Psoas muscle (tissue), 8 donors: ENCODE measurements at regions of chr1 and their contacts with region 1.

Region 1: DNA sequence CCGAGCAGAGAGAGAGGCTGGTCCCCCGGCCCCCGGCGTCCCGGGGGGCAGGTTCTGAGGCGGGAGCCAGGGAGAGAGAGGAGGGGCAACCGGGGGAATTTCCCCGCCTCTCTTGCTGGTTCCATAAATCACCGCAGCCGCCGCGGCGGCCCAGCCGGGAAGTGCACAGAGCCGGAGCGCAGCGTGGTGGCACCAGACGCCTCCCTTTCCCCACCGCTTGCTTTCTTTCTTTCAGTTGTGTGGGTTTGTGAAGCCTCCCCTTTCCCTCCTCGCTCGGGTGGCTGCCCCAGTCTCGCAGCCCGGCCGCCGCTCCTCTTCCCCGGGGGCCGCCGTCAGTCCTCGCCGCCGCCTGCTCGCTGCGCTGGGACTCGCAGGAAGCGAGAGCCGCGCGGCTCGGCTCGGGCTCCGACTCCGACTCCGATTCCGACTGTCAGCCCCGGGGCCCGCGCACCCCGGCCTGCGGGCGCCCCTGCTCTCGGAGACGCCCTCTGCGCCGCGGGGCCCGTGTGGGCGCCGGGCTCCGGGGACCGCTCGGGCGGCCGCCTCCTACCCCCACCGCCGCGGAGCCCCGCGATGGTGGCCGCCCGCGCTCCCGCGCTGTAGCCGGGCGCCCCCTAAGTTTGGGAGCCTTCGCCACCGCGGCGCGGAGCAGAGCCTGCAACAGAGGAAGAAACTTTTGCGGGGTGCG is at the start of gene CACHD1:
- DNase-seq: peak; percentile 79 to 88
- ATAC-seq: peak; percentile 77 to 90 (median 84)
- H3K4me3 ChIP-seq: peak within 1 kb of the TSS; percentile 91
- H3K27ac ChIP-seq: peak within 1 kb of the TSS; percentile 88
- H3K4me1 ChIP-seq: no peaks in the 10 kb centered on the region
- H3K27me3 ChIP-seq: no peaks in the 10 kb centered on the region
- CTCF ChIP-seq: peak; percentile 48
- total RNA-seq, gene CACHD1: 2.1 to 5.8 (median 4.1) TPM

Region 2: GRCh38 chr1:64268653-64269557 is 201.2 kb before region 1 on chr1:
- intact Hi-C with region 1: loop called in 1 of 2 experiments (anchors 10 kb)
- DNase-seq: peak; percentile 45 to 50
- ATAC-seq: peak; percentile 80 to 92 (median 81)
- H3K4me3 ChIP-seq: no peak overlapping the region
- H3K27ac ChIP-seq: no peak overlapping the region
- H3K4me1 ChIP-seq: no peaks in the 10 kb centered on the region
- H3K27me3 ChIP-seq: no peaks in the 10 kb centered on the region
- CTCF ChIP-seq: peak; percentile 84

Region 3: GRCh38 chr1:64505232-64505943 is 35.3 kb after region 1 on chr1:
- intact Hi-C with region 1: loop called in 1 of 2 experiments (anchors 1 kb)
- DNase-seq: peak; percentile 34 to 63
- ATAC-seq: peak; percentile 65 to 83 (median 72)
- H3K4me3 ChIP-seq: peak overlapping the region; percentile 69
- H3K27ac ChIP-seq: peak overlapping the region; percentile 12
- H3K4me1 ChIP-seq: peaks cover 12% of the 10 kb centered on the region
- H3K27me3 ChIP-seq: no peaks in the 10 kb centered on the region
- CTCF ChIP-seq: no peak

Region 4: GRCh38 chr1:64616039-64616438 is 145.9 kb after region 1 on chr1:
- intact Hi-C with region 1: loop called in 1 of 2 experiments (anchors 5 kb)
- DNase-seq: no peak
- ATAC-seq: peak; percentile 98 to 99 (median 98)
- H3K4me3 ChIP-seq: peak overlapping the region; percentile 13
- H3K27ac ChIP-seq: peak overlapping the region; percentile 82
- H3K4me1 ChIP-seq: peaks cover 17% of the 10 kb centered on the region
- H3K27me3 ChIP-seq: no peaks in the 10 kb centered on the region
- CTCF ChIP-seq: no peak

Region 5: DNA sequence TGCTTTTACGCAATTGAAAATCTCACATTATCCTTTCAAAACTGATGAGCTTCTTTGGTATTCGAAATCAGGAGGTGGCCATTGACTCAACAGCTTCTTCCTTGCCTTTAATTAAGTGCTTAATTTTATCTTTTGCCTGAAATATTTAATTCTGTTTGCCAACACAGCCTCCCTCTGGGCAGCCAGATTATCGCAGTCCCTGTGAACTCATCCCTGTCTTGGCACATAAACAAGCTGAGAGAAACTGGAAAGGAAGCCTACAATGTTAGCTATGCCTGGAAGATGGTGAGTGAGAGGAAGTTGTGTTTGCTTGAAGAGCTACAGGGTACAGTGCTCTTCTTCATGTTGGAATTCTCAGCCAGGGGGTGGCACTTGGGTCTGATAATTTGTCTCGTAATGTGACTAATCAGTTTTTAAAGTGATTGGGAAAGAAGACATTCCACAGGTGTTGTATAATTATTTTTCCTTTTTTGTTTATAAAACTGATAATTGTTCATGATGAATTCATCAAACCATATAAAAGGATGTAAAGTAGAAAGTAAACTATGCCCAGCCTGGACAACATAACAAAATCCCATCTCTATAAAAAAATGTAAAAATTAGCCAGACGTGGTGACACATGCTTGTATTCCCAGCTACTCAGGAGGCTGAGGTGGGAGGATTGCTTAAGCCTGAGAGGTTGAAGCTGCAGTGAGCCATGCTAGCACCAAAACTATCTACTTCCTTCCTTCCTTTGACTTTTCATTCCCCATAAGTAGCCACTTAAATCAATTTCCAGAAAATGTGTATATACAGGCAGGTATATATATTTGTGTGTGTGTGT is 184.6 kb after region 1 on chr1:
- intact Hi-C with region 1: loop called in 1 of 2 experiments (anchors 2 kb)
- DNase-seq: no peak
- ATAC-seq: no peak
- H3K4me3 ChIP-seq: no peak overlapping the region
- H3K27ac ChIP-seq: no peak overlapping the region
- H3K4me1 ChIP-seq: no peaks in the 10 kb centered on the region
- H3K27me3 ChIP-seq: no peaks in the 10 kb centered on the region
- CTCF ChIP-seq: peak; percentile 26

Region 6: GRCh38 chr1:64675718-64676345 is 205.7 kb after region 1 on chr1:
- intact Hi-C with region 1: loop called (anchors 5 kb)
- DNase-seq: no peak
- ATAC-seq: no peak
- H3K4me3 ChIP-seq: no peak overlapping the region
- H3K27ac ChIP-seq: no peak overlapping the region
- H3K4me1 ChIP-seq: no peaks in the 10 kb centered on the region
- H3K27me3 ChIP-seq: no peaks in the 10 kb centered on the region
- CTCF ChIP-seq: peak; percentile 69

Region 7: DNA sequence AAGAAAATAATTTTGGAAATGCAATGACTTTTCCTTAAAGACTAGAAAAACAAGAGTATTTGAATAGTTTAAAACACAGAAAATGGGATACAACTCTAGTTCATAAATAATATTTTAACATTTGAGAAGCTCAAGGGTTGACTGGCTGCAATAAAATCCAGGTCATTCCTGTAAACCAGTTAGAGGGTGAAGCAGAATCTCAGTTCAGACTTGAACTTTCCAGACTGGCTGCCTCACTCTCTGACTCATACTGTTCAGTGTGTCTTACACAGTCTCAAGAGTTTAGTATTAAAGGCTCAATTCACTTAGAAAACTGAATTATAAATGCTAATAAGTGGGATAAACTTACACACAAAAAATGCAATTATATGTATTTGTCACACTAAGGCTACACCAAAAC is 364.6 kb after region 1 on chr1:
- intact Hi-C with region 1: loop called in 1 of 2 experiments (anchors 10 kb)
- DNase-seq: no peak
- ATAC-seq: peak in 1 of 4 donors; percentile 39
- H3K4me3 ChIP-seq: no peak overlapping the region
- H3K27ac ChIP-seq: peak overlapping the region; percentile 1
- H3K4me1 ChIP-seq: peaks cover 7% of the 10 kb centered on the region
- H3K27me3 ChIP-seq: no peaks in the 10 kb centered on the region
- CTCF ChIP-seq: no peak